MCF 10A (cell line): ENCODE measurements at regions of chr12 and their contacts with region 1.

Region 1: DNA sequence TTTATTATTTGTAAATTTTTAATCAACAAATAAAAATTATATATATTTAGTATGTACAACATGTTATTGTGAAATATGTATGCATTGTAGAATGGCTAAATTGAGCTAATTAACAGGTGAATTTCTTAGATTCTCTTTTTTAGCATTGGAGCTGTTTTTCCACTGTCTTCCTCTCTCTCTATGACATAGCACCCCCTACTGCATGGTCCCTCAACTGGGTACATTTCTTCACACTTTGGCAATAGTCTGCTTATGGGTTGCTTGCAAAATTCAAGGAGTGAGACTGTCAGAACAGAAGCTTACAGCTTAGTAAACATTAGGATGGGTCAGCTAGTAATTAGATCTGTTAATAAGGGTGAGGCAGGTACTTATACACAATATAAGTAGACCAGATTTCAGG is 658.5 kb upstream of the MGAT4C start:
- DNase-seq: peak; percentile 70
- H3K4me3 Mint-ChIP-seq: no peak overlapping the region
- H3K27ac Mint-ChIP-seq: peak overlapping the region; percentile 25
- H3K4me1 Mint-ChIP-seq: peaks cover 6% of the 10 kb centered on the region
- H3K27me3 Mint-ChIP-seq: no peaks in the 10 kb centered on the region
- CTCF ChIP-seq: peak; percentile 55

Region 2: DNA sequence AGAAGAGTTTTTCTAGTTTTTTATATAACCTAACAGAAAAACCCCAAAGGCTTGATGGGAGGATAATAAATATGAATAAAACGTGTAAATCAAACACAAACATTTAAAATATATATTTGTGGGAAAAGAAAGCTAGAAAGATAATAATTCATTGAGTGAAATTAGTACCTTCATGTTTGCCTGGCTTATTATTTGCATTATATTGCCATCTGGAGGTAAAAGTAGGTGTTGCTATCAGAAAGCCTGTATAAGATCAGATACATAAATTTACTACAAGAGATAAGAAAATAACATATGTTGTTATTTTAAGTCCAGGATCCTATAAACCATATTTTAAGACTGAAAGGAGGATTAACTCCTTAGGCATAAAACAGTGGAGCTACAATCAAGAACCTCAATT is 962.9 kb before region 1 on chr12:
- CTCF ChIA-PET with region 1: interaction called, 31 read pairs
- POLR2A ChIA-PET with region 1: no interaction called
- intact Hi-C with region 1: loop called (anchors 1 kb)
- DNase-seq: peak; percentile 24
- H3K4me3 Mint-ChIP-seq: no peak overlapping the region
- H3K27ac Mint-ChIP-seq: no peak overlapping the region
- H3K4me1 Mint-ChIP-seq: no peaks in the 10 kb centered on the region
- H3K27me3 Mint-ChIP-seq: no peaks in the 10 kb centered on the region
- CTCF ChIP-seq: peak; percentile 55

Region 3: DNA sequence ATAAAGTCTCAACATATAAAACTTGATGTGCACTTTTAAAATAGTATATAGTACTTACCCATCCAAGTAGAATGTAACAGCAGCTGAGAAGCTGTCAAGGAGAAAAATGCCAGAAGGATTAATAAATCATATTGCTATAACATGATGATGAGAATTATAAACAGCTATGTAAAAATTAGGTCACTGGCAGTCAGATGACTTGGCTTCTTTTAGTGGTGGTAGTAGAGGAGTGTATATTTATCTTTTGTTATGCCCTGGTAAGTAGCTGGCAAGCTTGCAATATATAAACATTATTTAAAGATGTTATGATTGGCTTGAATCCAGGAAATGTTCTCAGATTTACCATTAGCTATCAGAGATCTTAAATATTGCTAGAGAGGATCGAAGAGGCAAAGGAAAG is 187.6 kb before region 1 on chr12:
- CTCF ChIA-PET with region 1: no interaction called
- POLR2A ChIA-PET with region 1: no interaction called
- intact Hi-C with region 1: loop called (anchors 5 kb)
- DNase-seq: peak; percentile 72
- H3K4me3 Mint-ChIP-seq: peak overlapping the region; percentile 16
- H3K27ac Mint-ChIP-seq: no peak overlapping the region
- H3K4me1 Mint-ChIP-seq: peaks cover 22% of the 10 kb centered on the region
- H3K27me3 Mint-ChIP-seq: no peaks in the 10 kb centered on the region
- CTCF ChIP-seq: no peak

Region 4: GRCh38 chr12:87667378-87667777 is 752.7 kb after region 1 on chr12:
- CTCF ChIA-PET with region 1: interaction called, 7 read pairs
- POLR2A ChIA-PET with region 1: no interaction called
- intact Hi-C with region 1: loop called (anchors 5 kb)
- DNase-seq: peak; percentile 55
- H3K4me3 Mint-ChIP-seq: no peak overlapping the region
- H3K27ac Mint-ChIP-seq: no peak overlapping the region
- H3K4me1 Mint-ChIP-seq: peaks cover 8% of the 10 kb centered on the region
- H3K27me3 Mint-ChIP-seq: no peaks in the 10 kb centered on the region
- CTCF ChIP-seq: peak; percentile 47